A549 (cell line): ENCODE measurements at regions of chr17 and their contacts with region 1.

Region 1: GRCh38 chr17:49230636-49231562 is at the start of gene PHOSPHO1:
- DNase-seq: peak; percentile 81 to 97
- ATAC-seq: peak; percentile 84 to 93
- H3K4me3 ChIP-seq: peak within 1 kb of the TSS; percentile 62
- H3K27ac ChIP-seq: peak within 1 kb of the TSS; percentile 33 to 74; a peak in 5 of 6 replicates
- H3K4me1 ChIP-seq: peaks cover 16% of the 10 kb centered on the region
- CTCF ChIP-seq: no peak
- EP300 ChIP-seq: no peak
- POLR2A ChIP-seq: peak; percentile 26; the same call in 1 of the 2 replicates
- RAD21 ChIP-seq: no peak
- polyA plus RNA-seq, gene PHOSPHO1: 0.32 and 0.34 TPM in 2 replicates

Region 2: DNA sequence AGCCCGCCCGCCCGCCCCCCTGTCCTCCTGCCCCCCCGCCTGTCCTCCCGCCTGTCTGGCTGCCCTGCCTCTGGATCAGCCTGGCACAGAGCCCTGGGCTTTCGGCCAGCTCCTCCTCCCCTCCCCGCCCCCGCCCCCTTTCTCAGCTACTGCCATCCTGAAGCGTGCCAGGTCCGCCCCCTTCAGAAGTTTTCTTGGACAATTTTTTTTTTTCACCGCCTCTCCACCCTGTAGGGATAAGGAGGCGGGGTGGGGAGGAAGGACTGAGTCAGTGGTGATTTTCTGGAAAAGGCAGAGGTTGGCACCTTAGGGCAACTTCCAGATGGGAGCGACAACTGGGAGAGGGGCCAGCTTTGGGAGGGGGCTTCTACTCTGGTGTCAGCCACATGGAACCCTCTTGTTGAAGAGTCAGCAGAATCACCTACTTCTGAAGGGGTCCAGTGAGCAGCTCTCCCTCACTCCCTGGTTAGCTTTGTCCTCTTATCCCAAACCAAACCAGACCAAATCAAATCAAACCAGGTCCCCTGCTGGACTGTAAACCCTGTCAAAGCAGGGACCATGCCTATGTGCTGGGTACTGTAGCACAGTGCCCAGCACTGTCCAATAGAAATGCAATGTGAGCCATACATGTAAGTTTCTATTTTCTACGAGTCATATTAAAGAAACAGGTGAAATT is 214.0 kb before region 1 on chr17:
- CTCF ChIA-PET with region 1: interaction called, 13 read pairs
- POLR2A ChIA-PET with region 1: no interaction called
- DNase-seq: peak; percentile 91 to 95
- ATAC-seq: peak; percentile 64 to 74
- H3K4me3 ChIP-seq: no peak overlapping the region
- H3K27ac ChIP-seq: peak overlapping the region; percentile 60 to 77; a peak in 5 of 6 replicates
- H3K4me1 ChIP-seq: peaks cover 100% of the 10 kb centered on the region
- CTCF ChIP-seq: no peak
- EP300 ChIP-seq: no peak
- POLR2A ChIP-seq: no peak
- RAD21 ChIP-seq: peak; percentile 16 to 42; a peak in 3 of 5 replicates

Region 3: DNA sequence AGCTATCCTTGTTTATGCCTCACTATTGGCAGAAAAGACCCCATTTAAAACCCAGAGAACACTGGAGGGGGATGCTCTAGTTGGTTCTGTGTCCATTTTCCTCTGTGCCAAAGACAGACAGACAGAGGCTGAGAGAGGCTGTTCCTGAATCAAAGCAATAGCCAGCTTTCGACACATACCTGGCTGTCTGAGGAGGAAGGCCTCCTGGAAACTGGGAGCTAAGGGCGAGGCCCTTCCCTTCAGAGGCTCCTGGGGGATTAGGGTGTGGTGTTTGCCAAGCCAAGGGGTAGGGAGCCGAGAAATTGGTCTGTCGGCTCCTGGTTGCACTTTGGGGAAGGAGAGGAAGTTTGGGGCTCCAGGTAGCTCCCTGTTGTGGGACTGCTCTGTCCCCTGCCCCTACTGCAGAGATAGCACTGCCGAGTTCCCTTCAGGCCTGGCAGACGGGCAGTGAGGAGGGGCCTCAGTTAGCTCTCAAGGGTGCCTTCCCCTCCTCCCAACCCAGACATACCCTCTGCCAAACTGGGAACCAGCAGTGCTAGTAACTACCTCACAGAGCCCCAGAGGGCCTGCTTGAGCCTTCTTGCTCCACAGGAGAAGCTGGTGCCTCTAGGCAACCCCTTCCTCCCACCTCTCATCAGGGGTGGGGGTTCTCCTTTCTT is 177.6 kb before region 1 on chr17:
- CTCF ChIA-PET with region 1: interaction called, 42 read pairs
- POLR2A ChIA-PET with region 1: interaction called, 3 read pairs
- DNase-seq: no peak
- ATAC-seq: peak; percentile 21 to 50; a peak in 4 of 6 replicates
- H3K4me3 ChIP-seq: no peak overlapping the region
- H3K27ac ChIP-seq: peak overlapping the region in 1 of 2 experiments; percentile 25; a peak in 1 of 6 replicates
- H3K4me1 ChIP-seq: no peaks in the 10 kb centered on the region
- CTCF ChIP-seq: no peak
- EP300 ChIP-seq: no peak
- POLR2A ChIP-seq: no peak
- RAD21 ChIP-seq: no peak

Region 4: DNA sequence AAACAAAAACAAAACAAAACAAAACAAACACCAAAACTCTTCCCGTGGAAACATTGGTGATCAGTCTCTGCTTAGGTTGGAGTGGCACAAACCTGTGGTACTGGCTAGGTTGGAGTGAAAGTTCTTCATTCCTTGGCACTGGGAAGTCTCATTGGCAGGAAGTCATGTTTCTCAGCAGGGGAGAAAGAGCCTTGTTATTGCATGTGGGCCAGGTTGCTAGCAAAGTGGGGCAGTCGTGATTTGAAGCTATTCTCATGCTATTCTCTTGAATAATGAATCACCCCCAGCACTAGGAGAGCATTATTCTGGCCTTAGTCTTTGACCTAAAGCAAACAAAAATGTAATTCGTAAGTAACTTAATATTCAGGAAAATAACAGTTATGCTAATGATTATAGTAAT is 122.6 kb before region 1 on chr17:
- CTCF ChIA-PET with region 1: interaction called, 14 read pairs
- POLR2A ChIA-PET with region 1: no interaction called
- DNase-seq: peak; percentile 62 to 72
- ATAC-seq: peak; percentile 36 to 52; a peak in 5 of 6 replicates
- H3K4me3 ChIP-seq: no peak overlapping the region
- H3K27ac ChIP-seq: peak overlapping the region; percentile 81 to 85
- H3K4me1 ChIP-seq: peaks cover 50% of the 10 kb centered on the region
- CTCF ChIP-seq: no peak
- EP300 ChIP-seq: peak; percentile 19 to 59; a peak in 2 of 5 replicates
- POLR2A ChIP-seq: no peak
- RAD21 ChIP-seq: no peak; a peak in 1 of 5 replicates

Region 5: GRCh38 chr17:49180303-49180702 is 50.6 kb before region 1 on chr17:
- CTCF ChIA-PET with region 1: interaction called, 27 read pairs
- POLR2A ChIA-PET with region 1: no interaction called
- DNase-seq: peak; percentile 69 to 79
- ATAC-seq: peak; percentile 62 to 87
- H3K4me3 ChIP-seq: no peak overlapping the region
- H3K27ac ChIP-seq: no peak overlapping the region
- H3K4me1 ChIP-seq: no peaks in the 10 kb centered on the region
- CTCF ChIP-seq: peak; percentile 85
- EP300 ChIP-seq: no peak
- POLR2A ChIP-seq: no peak
- RAD21 ChIP-seq: peak; percentile 72 to 75

Region 6: DNA sequence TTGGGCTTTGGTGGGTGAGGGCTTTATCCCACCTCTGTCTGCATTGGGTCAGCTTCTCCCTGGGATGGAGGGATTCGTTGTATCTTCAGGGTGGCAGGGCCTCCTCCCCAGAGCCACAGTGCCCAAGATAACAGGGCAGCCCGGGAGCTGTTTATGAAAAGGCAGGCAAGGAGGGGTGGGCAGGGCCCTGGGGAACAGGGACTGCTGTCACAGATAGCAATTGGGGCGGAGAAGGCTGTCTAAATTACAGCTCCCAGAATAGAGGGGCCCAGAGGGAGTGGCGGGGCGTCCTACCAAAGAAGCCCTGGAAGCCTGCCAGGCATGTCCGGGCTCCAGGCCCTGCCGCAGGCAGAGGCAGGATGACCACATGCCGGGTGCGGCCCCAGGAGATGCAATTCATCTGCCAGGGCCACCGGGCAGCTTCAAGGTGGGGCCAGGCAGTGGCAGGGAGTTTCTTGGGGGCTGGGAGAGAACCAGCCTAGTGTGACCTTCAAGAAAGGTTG is 18.4 kb after region 1 on chr17:
- CTCF ChIA-PET with region 1: interaction called, 15 read pairs
- POLR2A ChIA-PET with region 1: no interaction called
- DNase-seq: no peak
- ATAC-seq: peak; percentile 20 to 47; a peak in 5 of 6 replicates
- H3K4me3 ChIP-seq: no peak overlapping the region
- H3K27ac ChIP-seq: peak overlapping the region; percentile 14 to 26; a peak in 2 of 6 replicates
- H3K4me1 ChIP-seq: peaks cover 20% of the 10 kb centered on the region
- CTCF ChIP-seq: no peak
- EP300 ChIP-seq: no peak
- POLR2A ChIP-seq: no peak
- RAD21 ChIP-seq: no peak

Region 7: GRCh38 chr17:49290690-49291359 is 59.9 kb after region 1 on chr17:
- CTCF ChIA-PET with region 1: interaction called, 66 read pairs
- POLR2A ChIA-PET with region 1: no interaction called
- DNase-seq: peak; percentile 44 to 62
- ATAC-seq: peak; percentile 78 to 84; a peak in 5 of 6 replicates
- H3K4me3 ChIP-seq: no peak overlapping the region
- H3K27ac ChIP-seq: no peak overlapping the region
- H3K4me1 ChIP-seq: no peaks in the 10 kb centered on the region
- CTCF ChIP-seq: peak; percentile 70
- EP300 ChIP-seq: no peak
- POLR2A ChIP-seq: no peak
- RAD21 ChIP-seq: peak; percentile 69 to 70